SK-N-SH (cell line): ENCODE measurements at regions of chr3 and their contacts with region 1.

Region 1: DNA sequence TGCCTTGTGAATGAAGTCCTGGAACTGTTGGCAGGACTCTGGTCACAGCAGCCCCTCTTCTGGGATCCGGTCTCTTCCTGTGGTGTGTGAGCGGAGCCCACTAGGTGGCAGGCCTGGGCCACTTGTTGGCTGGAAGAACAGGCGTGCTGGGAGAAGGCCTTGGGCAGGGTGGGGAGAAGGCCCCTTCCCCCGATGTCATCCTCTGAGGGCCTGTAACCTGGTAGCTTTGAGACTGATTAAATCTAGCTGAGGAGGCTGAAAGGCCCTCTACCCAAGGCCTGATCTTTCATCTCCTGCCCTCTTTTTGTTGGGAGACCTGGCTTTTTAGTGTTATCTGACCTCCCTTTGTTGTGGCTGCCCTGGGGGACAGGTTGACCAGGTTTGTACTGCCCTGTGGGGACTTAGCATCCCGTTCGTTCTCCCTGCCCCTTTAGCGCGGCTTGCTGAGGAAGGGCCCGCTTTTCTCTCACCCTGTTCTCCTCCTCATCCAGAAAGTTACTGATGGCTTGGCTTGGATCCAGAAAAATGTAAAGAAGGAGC is 48.3 kb downstream of the CHCHD6 start:
- DNase-seq: peak; percentile 82
- H3K4me3 ChIP-seq: no peak overlapping the region; a peak in 1 of 4 replicates
- H3K27ac ChIP-seq: peak overlapping the region in 1 of 2 experiments; percentile 3; a peak in 1 of 4 replicates
- H3K4me1 ChIP-seq: peaks cover 0 to 53% of the 10 kb centered on the region in 2 experiments; a peak in 2 of 4 replicates
- H3K27me3 ChIP-seq: no peaks in the 10 kb centered on the region
- CTCF ChIP-seq: peak; percentile 93
- EP300 ChIP-seq: no peak
- RAD21 ChIP-seq: peak; percentile 98

Region 2: GRCh38 chr3:126679318-126679751 is 73.0 kb before region 1 on chr3:
- CTCF ChIA-PET with region 1: interaction called, 172 read pairs
- POLR2A ChIA-PET with region 1: interaction called, 9 read pairs
- DNase-seq: peak; percentile 88
- H3K4me3 ChIP-seq: peak overlapping the region in 1 of 2 experiments; percentile 29; a peak in 1 of 4 replicates
- H3K27ac ChIP-seq: peak overlapping the region; percentile 9 to 91; a peak in 3 of 4 replicates
- H3K4me1 ChIP-seq: peaks cover 15 to 52% of the 10 kb centered on the region in 2 experiments; a peak in 3 of 4 replicates
- H3K27me3 ChIP-seq: no peaks in the 10 kb centered on the region
- CTCF ChIP-seq: peak; percentile 87
- EP300 ChIP-seq: peak in 1 of 2 experiments; percentile 13; a peak in 1 of 4 replicates
- RAD21 ChIP-seq: peak; percentile 91

Region 3: DNA sequence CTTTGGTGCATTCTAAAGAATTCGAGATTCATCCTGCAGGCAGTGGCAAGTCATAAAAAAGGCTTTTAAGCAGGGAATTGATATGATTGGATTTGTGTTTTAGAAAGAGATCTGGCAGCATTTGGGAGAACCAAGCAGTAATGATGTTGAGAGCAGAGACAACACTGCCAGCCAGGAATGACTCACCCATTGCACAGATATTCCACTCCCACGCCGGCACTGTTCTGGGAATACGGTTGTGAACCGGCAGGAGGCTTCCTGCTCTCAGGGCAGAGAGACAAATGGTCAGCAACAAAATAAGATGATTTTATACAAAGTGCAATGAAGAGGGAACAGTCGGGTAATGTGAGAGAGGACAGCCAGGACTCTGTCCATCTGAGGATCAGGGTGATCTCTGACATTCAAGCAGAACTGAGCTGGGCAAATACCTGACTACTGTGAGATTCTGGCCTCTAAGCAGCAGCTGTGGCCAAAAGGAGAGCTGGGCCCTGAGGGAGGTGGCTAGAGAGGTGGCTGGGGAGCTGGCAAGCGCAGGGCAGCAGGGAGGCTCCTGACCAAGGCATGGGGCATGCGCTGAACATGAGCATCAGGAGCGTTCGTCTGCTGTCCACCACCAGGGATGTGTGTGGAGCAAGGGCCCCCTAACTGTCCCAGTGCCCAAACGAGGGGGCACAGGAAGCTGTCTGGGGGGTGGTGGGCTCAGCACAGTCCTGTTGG is 174.5 kb after region 1 on chr3:
- CTCF ChIA-PET with region 1: interaction called, 12 read pairs
- POLR2A ChIA-PET with region 1: no interaction called
- DNase-seq: no peak
- H3K4me3 ChIP-seq: peak overlapping the region in 1 of 2 experiments; percentile 1; a peak in 1 of 4 replicates
- H3K27ac ChIP-seq: peak overlapping the region; percentile 67 to 98
- H3K4me1 ChIP-seq: peaks cover 42 to 52% of the 10 kb centered on the region in 2 experiments
- H3K27me3 ChIP-seq: no peaks in the 10 kb centered on the region
- CTCF ChIP-seq: peak; percentile 51
- EP300 ChIP-seq: peak in 1 of 2 experiments; percentile 45; a peak in 1 of 4 replicates
- RAD21 ChIP-seq: no peak

Region 4: DNA sequence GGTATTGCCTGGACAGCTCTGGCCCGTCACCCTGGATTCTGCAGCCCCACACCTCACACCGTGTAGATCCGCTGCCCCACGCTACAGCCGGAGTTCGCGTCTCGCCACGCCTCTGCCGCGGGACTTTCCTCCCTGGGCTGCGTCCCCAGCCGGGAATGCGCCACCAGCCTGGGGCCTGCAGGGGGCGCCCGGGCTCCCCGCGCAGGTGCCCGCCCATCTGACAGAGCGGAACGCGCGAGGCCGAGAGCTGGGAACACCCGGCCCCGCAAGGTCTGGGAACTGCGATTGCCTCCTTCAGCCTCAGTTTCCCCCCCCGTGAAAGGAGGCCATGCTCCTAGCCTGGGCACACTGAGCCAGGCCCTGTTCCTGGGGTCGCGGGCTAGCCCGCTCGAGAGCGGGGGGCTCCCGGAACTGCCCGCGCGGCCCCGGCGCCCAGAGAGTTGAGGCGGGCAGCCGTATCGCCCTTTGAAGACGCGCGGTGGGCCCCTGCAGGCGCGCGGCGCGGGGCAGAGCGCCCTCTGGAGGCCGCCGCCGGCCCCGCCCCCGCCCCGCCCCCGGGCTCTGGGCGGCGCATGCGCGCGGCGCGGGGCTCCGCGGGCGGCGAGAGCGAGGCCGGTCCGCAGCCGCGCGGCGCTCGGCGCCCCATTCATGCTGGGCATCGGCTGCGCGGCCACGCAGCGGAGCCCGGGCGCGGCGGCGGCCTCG is 230.2 kb after region 1 on chr3 and contains the start of gene PLXNA1:
- CTCF ChIA-PET with region 1: interaction called, 163 read pairs
- POLR2A ChIA-PET with region 1: no interaction called
- DNase-seq: peak; percentile 97
- H3K4me3 ChIP-seq: peak within 1 kb of the TSS; percentile 84 to 89
- H3K27ac ChIP-seq: peak within 1 kb of the TSS; percentile 53; a peak in 3 of 4 replicates
- H3K4me1 ChIP-seq: peaks cover 10 to 41% of the 10 kb centered on the region in 2 experiments; a peak in 2 of 4 replicates
- H3K27me3 ChIP-seq: no peaks in the 10 kb centered on the region
- CTCF ChIP-seq: peak; percentile 81
- EP300 ChIP-seq: no peak
- RAD21 ChIP-seq: peak; percentile 53
- polyA plus RNA-seq, gene PLXNA1: 48.1 and 48.7 TPM in 2 replicates

Region 5: GRCh38 chr3:127172781-127173515 is 420.6 kb after region 1 on chr3:
- CTCF ChIA-PET with region 1: interaction called, 11 read pairs
- POLR2A ChIA-PET with region 1: no interaction called
- DNase-seq: peak; percentile 92
- H3K4me3 ChIP-seq: peak overlapping the region; percentile 15; a peak in 1 of 4 replicates
- H3K27ac ChIP-seq: peak overlapping the region; percentile 95 to 99
- H3K4me1 ChIP-seq: peaks cover 33 to 56% of the 10 kb centered on the region in 2 experiments
- H3K27me3 ChIP-seq: no peaks in the 10 kb centered on the region
- CTCF ChIP-seq: no peak
- EP300 ChIP-seq: peak; percentile 99
- RAD21 ChIP-seq: no peak; the same call in none of the 2 replicates

Region 6: DNA sequence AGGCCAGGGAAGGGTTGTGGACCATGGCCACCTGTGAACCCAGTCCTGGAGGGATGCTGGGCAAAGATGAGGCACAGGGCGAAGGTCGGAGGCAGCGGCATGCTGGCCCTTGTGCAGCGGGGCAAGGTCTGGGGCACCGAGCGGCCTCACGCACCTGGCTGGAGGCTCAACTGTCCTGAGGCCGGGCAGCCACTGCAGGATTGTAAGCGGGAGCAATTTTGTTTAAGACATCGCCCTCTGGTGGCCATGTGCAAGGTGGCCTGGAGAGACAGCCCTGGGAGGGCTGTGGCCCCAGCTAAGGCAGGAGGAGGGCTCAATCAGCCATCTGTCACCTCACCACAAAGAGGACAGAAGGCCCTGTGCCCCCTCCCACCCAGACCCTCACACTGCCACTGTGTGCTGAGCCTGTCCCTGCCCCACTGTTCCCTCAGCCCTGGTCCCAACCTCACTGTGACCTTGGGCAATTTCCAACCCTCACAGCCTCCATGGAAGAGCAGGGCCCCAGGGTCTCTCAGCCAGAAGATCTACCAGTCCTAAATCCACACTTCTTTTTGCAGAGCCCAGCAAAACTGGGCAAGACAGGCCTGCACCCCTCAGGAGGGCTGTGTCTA is 791.9 kb after region 1 on chr3:
- CTCF ChIA-PET with region 1: interaction called, 35 read pairs
- POLR2A ChIA-PET with region 1: no interaction called
- DNase-seq: peak; percentile 91
- H3K4me3 ChIP-seq: no peak overlapping the region; a peak in 1 of 4 replicates
- H3K27ac ChIP-seq: no peak overlapping the region
- H3K4me1 ChIP-seq: peaks cover 0 to 29% of the 10 kb centered on the region in 2 experiments; a peak in 1 of 4 replicates
- H3K27me3 ChIP-seq: no peaks in the 10 kb centered on the region
- CTCF ChIP-seq: peak; percentile 75
- EP300 ChIP-seq: no peak
- RAD21 ChIP-seq: peak; percentile 81